GM18951 (cell line): ENCODE measurements at regions of chr21 and their contacts with region 1.

Region 1: GRCh38 chr21:15483138-15483780 is 246.5 kb upstream of the USP25 start:
- POLR2A ChIP-seq: no peak

Region 2: GRCh38 chr21:14403681-14404318 is 1079.5 kb before region 1 on chr21:
- in situ Hi-C with region 1: loop called (anchors 25 kb)
- POLR2A ChIP-seq: no peak

Region 3: DNA sequence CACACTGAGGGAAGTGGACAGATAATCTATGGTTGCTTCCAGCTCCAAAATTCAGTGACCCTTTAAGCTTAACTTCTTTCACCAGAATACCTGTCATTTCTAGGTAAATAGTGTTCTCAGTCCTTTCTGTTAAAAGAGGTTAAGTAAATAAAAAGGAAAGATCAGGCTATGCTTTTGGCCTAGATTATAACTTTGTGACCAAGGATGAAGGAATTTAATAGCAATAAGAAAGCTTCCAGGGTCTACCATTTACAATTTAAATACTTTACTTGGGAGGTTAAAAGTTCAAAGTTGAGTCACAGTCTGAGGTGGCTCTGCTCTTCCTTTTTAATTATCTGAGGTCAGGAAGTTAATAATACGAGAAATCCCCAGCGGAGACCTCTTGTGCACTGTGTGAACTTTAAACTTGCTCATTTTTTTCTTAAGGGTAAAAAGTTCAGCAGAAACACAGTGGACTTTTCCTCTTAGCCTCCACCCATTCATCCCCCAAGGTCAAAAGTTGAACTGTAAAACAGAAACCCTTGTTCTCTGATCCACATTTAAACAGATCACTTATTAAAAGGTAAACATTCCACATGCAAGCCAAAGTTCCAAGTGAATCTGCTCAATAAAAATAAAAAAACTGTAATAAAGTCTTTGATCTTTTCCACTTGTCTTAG is 605.6 kb before region 1 on chr21:
- in situ Hi-C with region 1: loop called (anchors 25 kb)
- POLR2A ChIP-seq: no peak

Region 4: DNA sequence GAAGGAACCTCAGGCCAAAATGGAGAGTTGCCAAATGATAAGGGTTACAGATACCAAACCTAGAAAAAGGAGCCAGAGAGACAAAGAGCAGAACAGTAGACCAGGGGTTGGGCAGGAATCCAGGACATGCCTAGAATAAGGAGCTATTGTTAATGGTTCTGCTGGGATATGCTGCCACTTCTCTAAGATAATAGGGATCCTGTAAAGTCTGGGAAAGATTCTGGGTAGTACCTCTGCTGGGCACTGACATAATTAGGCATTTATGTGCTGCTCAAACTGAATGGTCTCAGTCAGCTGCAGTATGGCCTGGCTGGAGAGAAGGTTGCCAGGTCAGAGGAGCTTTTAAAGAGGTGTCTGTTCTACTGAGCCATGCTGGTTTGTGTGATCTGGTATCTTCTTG is 398.6 kb before region 1 on chr21:
- in situ Hi-C with region 1: no loop called
- POLR2A ChIP-seq: no peak

Region 5: GRCh38 chr21:15379776-15380175 is 103.5 kb before region 1 on chr21:
- in situ Hi-C with region 1: no loop called
- POLR2A ChIP-seq: no peak

Region 6: GRCh38 chr21:15549675-15550074 is 66.4 kb after region 1 on chr21:
- in situ Hi-C with region 1: no loop called
- POLR2A ChIP-seq: no peak